IMR-90 (cell line): ENCODE measurements at regions of chrX and their contacts with region 1.

Region 1: DNA sequence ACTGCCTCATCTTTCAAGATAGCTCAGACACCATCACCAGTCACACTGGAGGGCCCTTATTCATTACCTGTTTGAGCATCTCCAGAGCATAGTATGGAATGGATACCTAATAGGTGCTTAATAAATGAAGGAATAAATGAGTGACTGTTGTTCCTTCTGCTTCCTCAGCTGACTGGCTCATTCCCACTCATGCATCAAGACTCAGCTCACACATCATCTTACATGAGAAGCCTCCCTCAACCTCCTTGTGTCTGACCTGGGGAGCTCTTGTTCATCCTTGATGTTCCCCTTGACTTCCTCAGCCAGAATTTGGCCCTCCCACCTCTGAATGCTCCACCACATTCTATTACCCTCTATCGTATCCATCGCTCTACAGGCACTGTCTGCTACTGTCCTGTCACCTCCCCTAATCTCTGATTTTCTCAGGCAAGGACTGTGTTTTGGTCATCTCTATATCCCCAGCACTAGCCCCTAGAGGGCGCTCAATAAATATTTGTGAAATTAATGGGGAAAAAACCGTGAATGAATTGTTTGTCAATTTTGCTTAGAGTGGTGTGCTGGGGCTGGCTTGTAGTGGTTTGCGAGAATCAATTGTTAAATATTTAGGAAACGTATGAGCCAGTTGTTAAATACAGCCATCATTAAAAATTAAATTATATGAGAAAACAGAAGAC is 88.3 kb downstream of the NHSL2 start:
- DNase-seq: no peak
- ATAC-seq: peak; percentile 74
- H3K4me3 ChIP-seq: no peak overlapping the region
- H3K27ac ChIP-seq: no peak overlapping the region
- H3K4me1 ChIP-seq: no peaks in the 10 kb centered on the region; the same call in 1 of the 2 replicates
- H3K27me3 ChIP-seq: peaks cover 40% of the 10 kb centered on the region
- CTCF ChIP-seq: peak; percentile 66
- POLR2A ChIP-seq: no peak
- RAD21 ChIP-seq: peak; percentile 37

Region 2: DNA sequence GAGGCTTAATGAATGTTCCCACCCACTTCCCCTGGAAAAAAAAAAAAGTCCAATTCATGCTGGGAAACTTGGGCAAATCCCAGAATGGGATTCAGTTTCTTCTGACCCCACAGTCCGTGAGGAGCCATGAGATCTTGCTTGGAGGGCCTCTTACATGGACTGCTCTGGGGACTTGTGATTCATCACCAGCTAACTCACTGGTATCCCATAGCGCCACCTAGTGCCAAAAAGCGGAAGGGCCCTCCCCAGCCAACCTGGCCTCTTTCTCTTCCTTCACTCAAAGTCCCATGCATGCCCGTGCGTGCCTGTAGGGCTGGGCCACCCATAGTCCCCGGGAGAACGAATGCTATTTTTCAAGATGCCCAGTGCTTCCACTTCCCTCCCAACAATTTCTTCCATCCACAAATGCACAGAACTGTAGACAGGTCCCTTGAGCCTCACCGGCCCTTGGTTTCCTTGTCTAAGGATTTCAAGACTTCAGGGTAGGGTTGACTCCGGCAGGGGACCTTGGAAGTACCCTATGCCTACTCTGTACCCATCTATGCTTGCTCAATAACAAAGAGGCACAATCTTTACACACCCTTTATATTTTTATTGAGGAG is 127.7 kb after region 1 on chrX:
- CTCF ChIA-PET with region 1: no interaction called
- POLR2A ChIA-PET with region 1: no interaction called
- dilution Hi-C with region 1: no loop called
- in situ Hi-C with region 1: no loop called
- intact Hi-C with region 1: loop called (anchors 1 kb)
- DNase-seq: peak; percentile 80
- ATAC-seq: peak; percentile 89
- H3K4me3 ChIP-seq: no peak overlapping the region
- H3K27ac ChIP-seq: no peak overlapping the region
- H3K4me1 ChIP-seq: peaks cover 2% of the 10 kb centered on the region; the same call in 1 of the 2 replicates
- H3K27me3 ChIP-seq: peaks cover 50% of the 10 kb centered on the region
- CTCF ChIP-seq: peak; percentile 94
- POLR2A ChIP-seq: no peak
- RAD21 ChIP-seq: peak; percentile 85